A673 (cell line): ENCODE measurements at regions of chr1 and their contacts with region 1.

Region 1: DNA sequence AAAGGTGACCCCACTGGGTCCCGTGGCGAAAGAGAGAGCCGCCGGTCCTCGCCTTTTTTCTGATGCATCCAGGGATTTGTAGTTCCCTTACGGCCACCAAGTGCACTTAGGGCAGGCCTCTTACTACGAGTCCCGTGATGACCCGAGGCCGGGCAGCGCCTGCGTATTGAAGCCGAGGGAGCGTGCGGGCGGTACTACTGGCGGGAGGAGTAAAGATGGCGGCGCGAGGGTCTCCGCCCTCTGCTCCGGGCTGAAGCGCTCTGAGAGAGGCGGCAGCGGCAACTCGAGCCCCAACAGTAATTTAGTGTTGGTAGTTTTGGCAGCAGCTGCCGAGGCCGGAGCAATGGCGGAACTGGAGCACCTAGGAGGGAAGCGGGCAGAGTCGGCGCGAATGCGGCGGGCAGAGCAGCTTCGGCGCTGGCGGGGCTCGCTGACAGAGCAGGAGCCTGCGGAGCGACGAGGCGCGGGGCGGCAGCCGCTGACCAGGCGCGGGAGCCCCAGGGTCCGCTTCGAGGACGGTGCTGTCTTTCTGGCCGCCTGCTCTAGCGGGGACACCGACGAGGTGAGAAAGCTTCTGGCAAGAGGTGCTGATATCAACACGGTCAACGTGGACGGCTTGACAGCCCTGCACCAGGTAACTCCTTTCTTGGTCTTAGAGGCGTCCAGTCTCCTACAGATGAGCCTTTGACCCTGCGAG is at the start of gene PPP1R12B:
- DNase-seq: peak; percentile 99
- H3K4me3 ChIP-seq: peak within 1 kb of the TSS; percentile 65
- H3K27ac ChIP-seq: peak within 1 kb of the TSS; percentile 64
- H3K4me1 ChIP-seq: peaks cover 8% of the 10 kb centered on the region
- H3K27me3 ChIP-seq: no peaks in the 10 kb centered on the region
- CTCF ChIP-seq: no peak
- total RNA-seq, gene PPP1R12B: 17.0 and 18.6 TPM in 2 replicates

Region 2: DNA sequence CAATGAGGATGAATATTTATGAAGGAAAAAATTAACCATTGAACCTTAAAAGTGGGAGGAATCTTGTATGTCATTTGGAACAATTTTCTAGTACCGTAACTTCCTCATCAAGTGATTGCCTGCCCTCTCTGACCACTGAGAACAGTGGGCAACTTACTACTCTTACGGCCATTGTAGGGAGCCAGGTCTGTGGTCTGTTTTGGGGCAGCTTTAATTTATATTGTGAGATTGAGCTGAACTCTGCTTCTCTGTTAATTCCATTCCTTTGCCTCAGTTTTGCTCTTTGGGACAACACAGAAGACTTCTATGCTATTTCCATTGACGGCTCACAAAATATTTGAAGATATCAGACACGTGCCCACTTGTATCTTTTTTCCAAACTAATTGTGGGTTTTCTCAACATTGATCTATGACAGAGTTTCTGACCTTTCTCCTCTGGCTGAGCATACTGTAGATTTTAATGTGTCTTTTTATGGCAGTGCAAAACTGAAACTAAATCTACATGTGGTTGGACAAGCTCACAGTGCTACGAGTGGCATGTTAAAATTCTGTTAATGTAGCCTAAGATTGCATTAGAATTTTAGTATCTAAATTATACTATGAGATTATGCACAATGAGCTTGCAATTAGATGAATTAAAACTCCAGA is 1911.0 kb before region 1 on chr1:
- CTCF ChIA-PET with region 1: no interaction called
- POLR2A ChIA-PET with region 1: no interaction called
- intact Hi-C with region 1: no loop called
- DNase-seq: no peak
- H3K4me3 ChIP-seq: no peak overlapping the region
- H3K27ac ChIP-seq: no peak overlapping the region
- H3K4me1 ChIP-seq: no peaks in the 10 kb centered on the region
- H3K27me3 ChIP-seq: no peaks in the 10 kb centered on the region
- CTCF ChIP-seq: no peak

Region 3: GRCh38 chr1:202571347-202572339 is 223.0 kb after region 1 on chr1:
- CTCF ChIA-PET with region 1: no interaction called
- POLR2A ChIA-PET with region 1: no interaction called
- intact Hi-C with region 1: loop called (anchors 10 kb)
- DNase-seq: peak; percentile 69
- H3K4me3 ChIP-seq: no peak overlapping the region
- H3K27ac ChIP-seq: no peak overlapping the region
- H3K4me1 ChIP-seq: peaks cover 16% of the 10 kb centered on the region
- H3K27me3 ChIP-seq: no peaks in the 10 kb centered on the region
- CTCF ChIP-seq: peak; percentile 96

Region 4: DNA sequence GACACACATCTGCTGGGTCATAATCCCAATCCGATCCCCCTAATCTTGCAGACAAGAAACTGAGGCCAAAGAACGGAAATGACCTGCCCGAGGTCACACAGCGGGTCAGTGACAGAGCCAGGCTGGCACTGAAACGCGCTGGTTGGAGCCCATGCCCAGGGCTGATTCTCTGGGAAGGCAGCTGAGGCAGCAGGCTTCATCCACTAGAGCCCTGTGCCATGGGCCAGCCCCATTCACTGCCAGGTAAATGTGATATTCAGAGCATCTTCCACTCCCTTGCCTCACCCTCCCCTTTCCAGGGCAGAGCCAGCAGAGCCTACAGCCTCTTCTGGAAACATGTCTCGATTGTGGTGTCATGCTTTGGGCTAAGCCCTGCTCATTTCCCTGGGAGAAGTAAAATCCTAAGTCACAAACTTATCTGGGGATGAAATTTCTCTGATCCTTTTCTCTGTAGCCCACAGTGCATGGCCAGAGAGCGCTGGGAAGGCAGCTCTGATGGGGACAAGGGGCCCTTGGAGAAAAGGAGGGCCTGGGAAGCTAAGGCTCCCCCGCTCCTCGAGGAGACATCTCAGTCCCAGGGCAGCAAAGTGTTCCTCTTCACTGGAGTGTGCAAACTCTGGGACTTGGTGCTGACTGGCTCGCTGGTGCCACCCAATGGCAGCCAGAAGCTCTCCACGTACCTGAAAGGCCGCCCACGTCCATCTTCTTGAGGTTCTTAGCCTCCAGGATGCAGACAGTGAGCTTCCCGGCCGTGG is 251.2 kb after region 1 on chr1:
- CTCF ChIA-PET with region 1: no interaction called
- POLR2A ChIA-PET with region 1: no interaction called
- intact Hi-C with region 1: loop called (anchors 5 kb)
- DNase-seq: peak; percentile 84
- H3K4me3 ChIP-seq: no peak overlapping the region
- H3K27ac ChIP-seq: peak overlapping the region; percentile 6
- H3K4me1 ChIP-seq: no peaks in the 10 kb centered on the region
- H3K27me3 ChIP-seq: no peaks in the 10 kb centered on the region
- CTCF ChIP-seq: peak; percentile 96

Region 5: DNA sequence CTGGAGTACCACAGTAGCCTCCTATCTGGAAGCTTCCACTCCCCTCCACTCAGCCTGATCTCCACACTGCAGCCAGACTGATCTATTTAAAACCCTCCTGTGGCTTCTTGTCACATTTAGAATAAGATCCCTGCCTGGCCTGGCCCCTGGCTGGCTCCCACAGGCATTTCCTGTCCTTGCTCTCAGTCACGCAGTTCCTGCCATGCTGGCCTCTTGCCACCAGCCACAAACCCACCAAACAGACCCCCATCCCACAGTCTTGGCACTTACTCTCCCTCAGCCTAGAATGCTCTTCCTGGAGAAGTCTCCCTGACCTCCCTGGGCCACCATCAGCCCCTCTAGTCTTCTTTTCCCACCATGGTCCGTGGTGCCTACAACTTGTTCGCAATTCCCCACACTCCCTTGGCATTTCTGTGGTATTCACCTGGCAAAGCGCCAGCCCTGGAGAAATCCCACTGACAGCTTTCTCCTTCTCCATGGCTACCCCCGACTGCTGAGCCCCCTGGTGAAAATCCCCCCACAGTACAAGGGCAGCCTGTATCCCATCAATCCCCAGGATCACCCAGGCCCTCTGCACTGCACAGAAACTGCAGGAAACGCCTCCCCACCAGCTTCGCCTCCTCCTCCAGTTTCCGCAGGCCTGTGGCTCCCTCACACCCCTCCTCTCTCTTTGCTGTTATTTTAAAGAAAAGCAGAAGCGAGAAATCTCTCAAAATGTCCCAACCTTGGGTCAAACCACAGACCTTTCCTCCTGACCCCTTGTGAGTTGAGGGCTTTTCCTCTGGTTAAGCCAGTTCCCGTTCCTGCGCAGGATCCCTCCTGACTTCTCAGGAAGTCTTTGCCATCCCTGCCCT is 267.1 kb after region 1 on chr1:
- CTCF ChIA-PET with region 1: no interaction called
- POLR2A ChIA-PET with region 1: no interaction called
- intact Hi-C with region 1: loop called (anchors 5 kb)
- DNase-seq: peak; percentile 91
- H3K4me3 ChIP-seq: no peak overlapping the region
- H3K27ac ChIP-seq: peak overlapping the region; percentile 81
- H3K4me1 ChIP-seq: peaks cover 40% of the 10 kb centered on the region
- H3K27me3 ChIP-seq: no peaks in the 10 kb centered on the region
- CTCF ChIP-seq: no peak

Region 6: GRCh38 chr1:203006948-203007871 is 658.6 kb after region 1 on chr1 and contains the start of gene TMEM183A:
- CTCF ChIA-PET with region 1: no interaction called
- POLR2A ChIA-PET with region 1: no interaction called
- intact Hi-C with region 1: loop called (anchors 10 kb)
- DNase-seq: peak; percentile 98
- H3K4me3 ChIP-seq: peak within 1 kb of the TSS; percentile 97
- H3K27ac ChIP-seq: peak within 1 kb of the TSS; percentile 90
- H3K4me1 ChIP-seq: peaks cover 13% of the 10 kb centered on the region
- H3K27me3 ChIP-seq: no peaks in the 10 kb centered on the region
- CTCF ChIP-seq: no peak
- total RNA-seq, gene TMEM183A: 65.1 and 68.4 TPM in 2 replicates

Region 7: DNA sequence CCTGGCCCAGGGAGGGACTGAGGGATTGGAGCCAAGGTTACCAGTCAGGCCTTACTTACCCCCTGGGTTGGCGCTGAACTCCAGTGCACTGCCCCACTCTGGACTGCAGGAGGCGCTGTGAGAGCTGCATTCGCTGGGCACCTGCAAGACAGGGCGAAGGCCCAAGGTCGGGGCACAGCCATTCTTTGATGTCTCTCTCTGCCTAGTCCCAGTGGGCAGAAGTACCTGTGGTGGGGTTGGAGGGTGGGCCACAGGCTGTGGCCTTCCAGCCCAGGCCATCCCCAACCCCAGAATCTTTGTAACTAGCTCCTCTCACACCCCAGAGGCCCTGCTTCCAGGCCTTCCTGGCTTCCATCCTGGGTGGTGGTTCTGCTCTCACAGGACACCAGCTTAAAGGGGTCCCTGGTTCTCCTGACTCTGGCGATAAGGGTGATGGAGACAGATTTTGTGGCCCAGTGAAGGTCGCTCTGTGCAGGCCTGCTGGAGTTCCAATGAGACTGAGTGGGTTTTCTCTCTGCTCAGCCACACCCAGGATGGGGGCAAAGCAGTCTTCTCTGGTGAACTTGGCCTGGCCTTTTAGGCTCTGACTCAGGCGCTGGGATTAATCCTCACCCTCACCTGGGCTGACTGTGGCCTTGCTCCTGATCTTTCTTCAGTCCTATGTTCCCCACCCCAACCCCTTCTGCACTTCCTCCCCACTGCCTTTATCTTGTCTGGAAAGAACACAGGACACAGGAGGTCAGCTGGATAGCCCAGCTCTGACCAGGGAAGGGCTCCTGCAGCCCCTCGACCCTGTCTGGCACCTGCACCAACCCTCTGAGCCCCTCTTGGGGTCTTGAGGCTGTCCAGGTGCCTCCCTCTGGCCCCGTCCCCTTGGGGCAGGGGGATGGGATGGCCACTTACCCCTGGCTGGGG is 736.2 kb after region 1 on chr1:
- CTCF ChIA-PET with region 1: no interaction called
- POLR2A ChIA-PET with region 1: no interaction called
- intact Hi-C with region 1: no loop called
- DNase-seq: peak; percentile 34
- H3K4me3 ChIP-seq: no peak overlapping the region
- H3K27ac ChIP-seq: no peak overlapping the region
- H3K4me1 ChIP-seq: no peaks in the 10 kb centered on the region
- H3K27me3 ChIP-seq: peaks cover 4% of the 10 kb centered on the region
- CTCF ChIP-seq: peak; percentile 73